Activated naive CD4-positive, alpha-beta T cell treated with anti-CD3 and anti-CD28 coated beads for 36 hours (primary cell): ENCODE measurements at regions of chr3 and their contacts with region 1.

Region 1: DNA sequence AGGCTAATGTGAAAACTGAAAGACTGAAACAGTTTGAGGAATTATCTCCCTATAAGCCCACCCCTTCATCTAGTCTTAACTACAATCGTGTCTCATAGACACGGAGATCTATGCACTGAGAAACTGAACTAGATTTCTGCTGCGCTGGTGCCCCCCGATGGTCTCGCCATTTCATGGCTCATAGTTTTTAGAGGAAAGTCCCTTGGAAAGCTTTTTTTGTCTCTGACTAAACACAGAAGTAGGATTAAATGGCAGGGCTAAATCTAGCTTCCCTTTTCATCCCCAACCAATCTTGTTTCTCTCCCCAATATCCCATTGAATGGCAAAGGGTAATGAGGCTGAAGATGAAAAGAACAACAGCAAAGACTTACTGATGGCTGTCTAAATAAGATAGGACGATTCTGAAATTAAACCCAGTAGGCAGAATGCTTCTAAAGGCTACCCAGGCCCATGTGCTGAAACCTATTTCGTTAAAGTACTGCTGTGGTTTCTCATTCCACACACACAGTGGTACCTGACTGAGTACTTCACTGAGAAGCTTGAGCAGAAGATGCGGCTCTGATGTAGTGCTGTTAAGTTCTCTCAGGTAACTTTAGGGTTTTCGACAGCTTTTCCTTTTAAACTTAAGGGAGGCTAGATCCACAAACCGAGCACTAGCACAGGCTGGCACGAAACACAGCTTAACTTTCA is 142.7 kb downstream of the GADL1 start:
- DNase-seq: peak; percentile 88
- H3K4me3 Mint-ChIP-seq: no peak overlapping the region
- H3K27ac Mint-ChIP-seq: no peak overlapping the region
- H3K4me1 Mint-ChIP-seq: peaks cover 45% of the 10 kb centered on the region
- H3K27me3 Mint-ChIP-seq: no peaks in the 10 kb centered on the region

Region 2: DNA sequence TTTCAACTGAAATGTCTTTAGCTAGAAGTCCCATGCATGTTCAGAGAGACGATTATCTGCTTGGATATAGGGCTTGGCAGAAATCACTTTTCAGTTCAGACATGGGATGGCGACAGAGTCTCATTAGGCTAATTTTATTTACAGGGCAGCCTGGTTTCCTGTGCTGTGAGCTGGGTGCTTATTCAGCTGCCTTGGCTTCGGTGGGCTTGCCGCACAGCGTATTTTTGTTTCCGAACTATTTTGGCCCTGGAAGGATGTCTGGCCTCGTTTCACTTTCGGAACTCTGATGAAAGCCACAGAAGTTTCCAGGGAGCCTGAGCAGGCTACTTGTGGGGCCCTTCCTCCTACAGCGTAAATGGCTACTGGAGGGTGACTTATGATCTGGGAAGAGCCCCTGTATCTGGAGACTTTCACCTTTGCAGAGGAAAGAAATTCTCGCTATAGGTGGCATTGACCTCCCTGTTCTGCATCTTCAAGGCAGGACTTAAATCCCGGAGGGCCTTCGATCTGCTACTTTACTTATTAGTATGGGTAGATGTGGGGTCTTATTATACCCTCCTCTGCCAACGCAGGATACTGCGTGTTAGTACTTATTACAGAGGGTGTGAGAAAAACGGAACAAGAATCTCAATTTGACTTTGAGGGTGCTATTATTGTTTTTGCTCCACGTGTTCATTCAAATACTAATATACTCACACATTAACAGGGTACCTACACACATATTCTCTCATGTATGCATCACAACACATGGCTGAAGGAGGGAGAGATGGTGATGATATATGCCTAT is 1834.8 kb before region 1 on chr3:
- CTCF ChIA-PET with region 1: no interaction called
- intact Hi-C with region 1: loop called (anchors 5 kb)
- DNase-seq: peak; percentile 16
- H3K4me3 Mint-ChIP-seq: no peak overlapping the region
- H3K27ac Mint-ChIP-seq: no peak overlapping the region
- H3K4me1 Mint-ChIP-seq: peaks cover 6% of the 10 kb centered on the region
- H3K27me3 Mint-ChIP-seq: peaks cover 5% of the 10 kb centered on the region

Region 3: DNA sequence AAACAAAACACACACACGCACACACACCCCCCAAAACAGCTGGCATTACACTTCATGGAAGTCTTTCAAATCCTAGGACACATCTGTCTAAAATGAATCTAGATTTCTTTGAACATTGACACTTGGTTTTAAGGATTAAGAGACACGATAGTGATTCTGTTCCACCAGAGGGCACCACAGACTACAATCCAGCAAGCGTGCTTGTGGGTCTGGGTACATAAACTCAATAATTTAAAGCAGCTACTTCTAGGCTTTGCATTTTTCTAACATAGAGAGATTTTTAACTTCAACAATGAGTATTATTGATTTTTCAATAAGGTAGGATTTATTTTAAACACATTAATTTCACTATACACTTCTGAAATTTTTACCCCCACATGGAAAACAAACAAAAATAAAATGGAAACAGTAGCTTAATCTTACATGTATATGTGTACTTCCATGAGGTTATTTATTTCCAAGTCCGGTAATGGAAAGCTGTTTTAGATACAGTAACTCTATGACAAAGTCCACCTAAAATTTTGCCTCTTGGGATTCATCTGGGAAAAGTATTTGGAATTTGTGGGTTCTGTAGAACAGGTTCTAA is 709.4 kb before region 1 on chr3:
- CTCF ChIA-PET with region 1: interaction called, 32 read pairs
- intact Hi-C with region 1: loop called (anchors 1 kb)
- DNase-seq: peak; percentile 84
- H3K4me3 Mint-ChIP-seq: no peak overlapping the region
- H3K27ac Mint-ChIP-seq: no peak overlapping the region
- H3K4me1 Mint-ChIP-seq: no peaks in the 10 kb centered on the region
- H3K27me3 Mint-ChIP-seq: peaks cover 29% of the 10 kb centered on the region

Region 4: DNA sequence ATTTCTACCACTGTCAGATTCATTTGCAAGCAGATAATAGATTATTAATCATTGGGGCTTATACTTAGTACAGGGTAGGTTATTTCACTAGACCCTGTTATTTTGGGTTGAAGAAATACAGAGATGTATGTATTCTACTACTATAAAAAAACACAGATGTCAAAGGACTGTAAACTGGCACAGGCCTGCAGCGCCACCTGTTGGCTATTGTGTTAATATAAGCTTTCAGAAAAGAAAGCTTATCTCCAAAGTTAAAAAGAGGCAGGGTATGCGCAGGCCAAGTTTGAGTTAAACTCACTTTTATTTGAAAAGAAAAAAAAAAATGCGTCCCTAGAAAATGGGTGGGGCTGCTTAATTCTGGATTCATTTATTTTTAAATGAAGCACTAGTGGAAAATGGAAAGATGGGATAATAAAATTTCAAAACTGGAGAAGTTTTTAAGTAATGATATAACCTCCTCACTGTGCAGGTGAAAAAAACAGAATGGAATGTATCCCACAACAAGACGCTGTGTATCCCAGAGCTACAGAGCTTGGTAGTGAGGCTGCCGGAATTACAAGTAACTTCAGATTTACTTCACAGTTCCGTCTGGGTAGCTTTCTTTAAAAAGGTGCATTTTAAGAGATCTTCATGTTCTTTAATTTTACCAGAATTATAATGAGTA is 552.5 kb before region 1 on chr3:
- CTCF ChIA-PET with region 1: interaction called, 8 read pairs
- intact Hi-C with region 1: loop called (anchors 1 kb)
- DNase-seq: peak; percentile 89
- H3K4me3 Mint-ChIP-seq: no peak overlapping the region
- H3K27ac Mint-ChIP-seq: no peak overlapping the region
- H3K4me1 Mint-ChIP-seq: peaks cover 6% of the 10 kb centered on the region
- H3K27me3 Mint-ChIP-seq: no peaks in the 10 kb centered on the region

Region 5: GRCh38 chr3:30437171-30437601 is 314.6 kb before region 1 on chr3:
- CTCF ChIA-PET with region 1: no interaction called
- intact Hi-C with region 1: loop called (anchors 1 kb)
- DNase-seq: no peak
- H3K4me3 Mint-ChIP-seq: no peak overlapping the region
- H3K27ac Mint-ChIP-seq: no peak overlapping the region
- H3K4me1 Mint-ChIP-seq: peaks cover 26% of the 10 kb centered on the region
- H3K27me3 Mint-ChIP-seq: no peaks in the 10 kb centered on the region

Region 6: GRCh38 chr3:30606301-30607031 is 145.3 kb before region 1 on chr3 and contains the start of gene TGFBR2:
- CTCF ChIA-PET with region 1: no interaction called
- intact Hi-C with region 1: loop called (anchors 2 kb)
- DNase-seq: peak; percentile 90
- H3K4me3 Mint-ChIP-seq: peak within 1 kb of the TSS; percentile 94
- H3K27ac Mint-ChIP-seq: peak within 1 kb of the TSS; percentile 100
- H3K4me1 Mint-ChIP-seq: peaks cover 52% of the 10 kb centered on the region
- H3K27me3 Mint-ChIP-seq: no peaks in the 10 kb centered on the region
- total RNA-seq, gene TGFBR2: 57.8 to 58.1 TPM